ENCODE measurements at regions of chr5 and their contacts with region 1.

Region 1: DNA sequence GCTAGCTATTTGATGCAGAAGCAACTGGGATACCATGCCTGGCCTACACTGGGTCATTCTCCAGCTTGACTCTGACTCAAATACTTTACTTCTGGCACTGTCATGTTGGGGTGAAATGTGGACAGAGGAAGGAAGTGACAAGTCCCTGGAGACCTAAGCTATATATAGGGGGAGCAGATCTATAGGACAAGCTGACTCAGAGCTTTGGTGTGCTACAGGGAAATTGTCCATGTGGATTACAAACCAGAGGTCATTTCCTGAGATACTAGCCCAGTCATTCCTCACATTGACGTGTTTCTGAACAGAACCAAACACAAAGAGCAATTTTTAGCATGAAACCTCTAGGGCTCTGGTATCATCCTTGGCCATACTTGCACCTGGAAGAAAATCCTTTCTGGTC is 531.6 kb upstream of the CLINT1 start:
- DNase-seq: peak; percentile 95
- H3K4me3 ChIP-seq: no peak overlapping the region
- H3K27ac ChIP-seq: peak overlapping the region; percentile 74
- H3K4me1 ChIP-seq: peaks cover 40% of the 10 kb centered on the region
- H3K27me3 ChIP-seq: no peaks in the 10 kb centered on the region
- CTCF ChIP-seq: no peak
- POLR2A ChIP-seq: peak; percentile 62

Region 2: DNA sequence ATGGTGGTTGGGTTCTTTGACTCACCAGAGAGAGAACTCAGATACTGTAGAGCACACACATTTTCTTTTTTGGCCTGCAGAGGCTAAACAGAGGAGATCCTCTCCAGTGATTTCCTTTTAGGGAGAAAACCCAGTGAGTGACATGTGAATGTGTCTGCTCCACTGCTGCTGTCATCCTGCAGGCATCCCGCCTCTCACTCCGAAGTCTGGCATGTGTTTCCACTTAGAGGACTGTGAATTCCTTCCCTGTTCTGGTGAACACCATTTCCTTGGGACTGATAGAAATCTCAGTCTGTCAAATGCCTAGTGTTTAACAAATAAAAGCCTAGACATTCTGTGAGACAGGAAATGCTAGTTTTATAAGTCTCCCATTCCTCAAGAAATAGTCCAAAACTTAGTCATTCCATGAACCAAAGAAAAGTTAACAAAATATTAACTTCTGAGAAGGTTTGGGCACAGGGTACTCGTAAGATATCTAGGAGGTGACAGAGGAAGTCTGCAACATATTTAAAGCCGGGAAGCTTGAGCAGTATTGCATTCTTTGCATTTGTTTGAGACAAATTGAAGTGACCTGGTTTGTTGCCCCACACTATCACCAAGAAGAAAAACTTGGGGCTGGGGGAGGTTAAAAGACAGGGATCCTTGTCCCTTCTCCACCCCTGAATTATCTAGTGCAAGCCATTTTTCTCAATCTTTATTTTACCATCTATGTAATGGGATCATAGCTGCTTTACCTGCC is 1005.4 kb before region 1 on chr5:
- CTCF ChIA-PET with region 1: no interaction called
- POLR2A ChIA-PET with region 1: no interaction called
- dilution Hi-C with region 1: no loop called
- intact Hi-C with region 1: loop called (anchors 2 kb)
- DNase-seq: peak; percentile 91
- H3K4me3 ChIP-seq: no peak overlapping the region
- H3K27ac ChIP-seq: peak overlapping the region; percentile 88
- H3K4me1 ChIP-seq: peaks cover 57% of the 10 kb centered on the region
- H3K27me3 ChIP-seq: no peaks in the 10 kb centered on the region
- CTCF ChIP-seq: no peak
- POLR2A ChIP-seq: no peak

Region 3: DNA sequence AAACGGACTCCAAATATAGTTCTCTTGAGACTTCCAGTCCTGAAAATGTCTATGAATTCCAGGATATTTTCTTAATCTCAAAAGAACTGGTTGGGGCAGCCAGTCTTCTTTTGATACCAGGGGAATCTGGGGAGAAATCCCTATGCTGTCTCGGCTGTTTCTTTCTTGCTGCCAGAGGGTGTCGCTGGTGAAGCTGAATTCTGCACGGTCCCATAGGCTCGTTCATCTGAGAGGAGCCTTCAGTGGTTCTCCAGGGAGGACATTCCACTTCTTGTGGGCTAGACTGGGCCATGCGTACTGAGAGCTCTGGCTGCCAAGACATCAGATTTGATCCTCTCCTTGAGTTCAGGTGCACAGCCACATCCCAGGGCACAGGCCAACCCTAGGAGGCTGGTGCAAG is 376.6 kb before region 1 on chr5:
- CTCF ChIA-PET with region 1: no interaction called
- POLR2A ChIA-PET with region 1: no interaction called
- dilution Hi-C with region 1: no loop called
- intact Hi-C with region 1: loop called (anchors 1 kb)
- DNase-seq: peak; percentile 29
- H3K4me3 ChIP-seq: no peak overlapping the region
- H3K27ac ChIP-seq: no peak overlapping the region
- H3K4me1 ChIP-seq: no peaks in the 10 kb centered on the region
- H3K27me3 ChIP-seq: no peaks in the 10 kb centered on the region
- CTCF ChIP-seq: peak; percentile 17 to 26
- POLR2A ChIP-seq: no peak

Region 4: GRCh38 chr5:158414780-158415179 is 24.2 kb after region 1 on chr5:
- CTCF ChIA-PET with region 1: interaction called, 5 read pairs
- POLR2A ChIA-PET with region 1: no interaction called
- dilution Hi-C with region 1: no loop called
- intact Hi-C with region 1: loop called (anchors 1 kb)
- DNase-seq: peak; percentile 91
- H3K4me3 ChIP-seq: no peak overlapping the region
- H3K27ac ChIP-seq: peak overlapping the region; percentile 60
- H3K4me1 ChIP-seq: peaks cover 14% of the 10 kb centered on the region
- H3K27me3 ChIP-seq: no peaks in the 10 kb centered on the region
- CTCF ChIP-seq: no peak
- POLR2A ChIP-seq: no peak

Region 5: GRCh38 chr5:159100025-159100781 is 709.6 kb after region 1 on chr5:
- CTCF ChIA-PET with region 1: no interaction called
- POLR2A ChIA-PET with region 1: no interaction called
- dilution Hi-C with region 1: no loop called
- intact Hi-C with region 1: loop called (anchors 1 kb)
- DNase-seq: peak; percentile 87
- H3K4me3 ChIP-seq: peak overlapping the region; percentile 26 to 67 (median 38)
- H3K27ac ChIP-seq: no peak overlapping the region
- H3K4me1 ChIP-seq: peaks cover 12% of the 10 kb centered on the region
- H3K27me3 ChIP-seq: peaks cover 65 to 70% of the 10 kb centered on the region in 2 experiments
- CTCF ChIP-seq: no peak
- POLR2A ChIP-seq: no peak